ENCODE measurements at regions of chr1 and their contacts with region 1.

Region 1: DNA sequence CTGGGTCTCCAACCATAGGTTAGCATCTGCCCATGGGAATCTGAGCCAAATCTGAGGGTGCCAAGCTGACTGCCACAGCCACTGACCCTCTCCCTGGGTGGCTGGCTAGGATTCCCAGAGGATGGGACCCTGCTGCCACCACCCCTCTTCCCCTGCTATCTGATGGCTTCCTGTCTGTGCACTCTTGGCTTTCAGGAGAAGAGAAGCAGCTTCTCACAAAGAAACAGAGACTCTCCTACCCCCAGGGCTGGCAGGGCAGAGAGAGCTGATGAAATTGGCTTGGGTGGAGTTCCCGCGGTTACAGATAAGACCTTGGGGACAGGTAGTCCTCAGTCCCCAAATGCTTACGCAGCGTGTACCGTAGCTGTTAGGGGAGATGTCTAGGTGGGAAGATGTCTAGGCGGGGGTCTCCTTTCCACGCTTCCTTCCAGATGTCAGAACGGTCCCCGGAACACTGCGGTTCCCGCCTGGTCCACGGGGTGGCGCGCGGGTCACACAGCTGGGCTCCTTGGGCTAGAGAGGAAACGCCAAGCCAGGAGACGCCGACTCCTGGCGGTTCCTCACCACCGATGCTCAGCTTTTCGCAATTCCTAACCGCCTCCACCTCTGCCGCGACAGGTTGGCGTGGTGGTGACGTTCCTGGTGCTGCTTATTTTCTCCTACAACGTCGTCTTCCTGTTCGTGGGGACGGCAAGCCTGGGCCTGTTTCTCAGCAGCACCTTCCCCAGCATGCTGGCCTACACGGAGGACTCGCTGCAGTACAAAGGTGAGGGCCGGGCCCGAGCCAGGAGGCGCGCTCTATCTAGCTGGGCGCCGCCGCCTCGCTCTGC is 40.1 kb downstream of the ELK4 start:
- H3K4me3 Mint-ChIP-seq: peak overlapping the region; percentile 63
- H3K27ac Mint-ChIP-seq: no peak overlapping the region
- H3K4me1 Mint-ChIP-seq: peaks cover 14% of the 10 kb centered on the region
- H3K27me3 Mint-ChIP-seq: peaks cover 7% of the 10 kb centered on the region

Region 2: GRCh38 chr1:205528887-205529825 is 62.6 kb before region 1 on chr1:
- intact Hi-C with region 1: loop called (anchors 10 kb)
- H3K4me3 Mint-ChIP-seq: peak overlapping the region; percentile 35
- H3K27ac Mint-ChIP-seq: peak overlapping the region; percentile 24
- H3K4me1 Mint-ChIP-seq: peaks cover 11% of the 10 kb centered on the region
- H3K27me3 Mint-ChIP-seq: peaks cover 13% of the 10 kb centered on the region

Region 3: DNA sequence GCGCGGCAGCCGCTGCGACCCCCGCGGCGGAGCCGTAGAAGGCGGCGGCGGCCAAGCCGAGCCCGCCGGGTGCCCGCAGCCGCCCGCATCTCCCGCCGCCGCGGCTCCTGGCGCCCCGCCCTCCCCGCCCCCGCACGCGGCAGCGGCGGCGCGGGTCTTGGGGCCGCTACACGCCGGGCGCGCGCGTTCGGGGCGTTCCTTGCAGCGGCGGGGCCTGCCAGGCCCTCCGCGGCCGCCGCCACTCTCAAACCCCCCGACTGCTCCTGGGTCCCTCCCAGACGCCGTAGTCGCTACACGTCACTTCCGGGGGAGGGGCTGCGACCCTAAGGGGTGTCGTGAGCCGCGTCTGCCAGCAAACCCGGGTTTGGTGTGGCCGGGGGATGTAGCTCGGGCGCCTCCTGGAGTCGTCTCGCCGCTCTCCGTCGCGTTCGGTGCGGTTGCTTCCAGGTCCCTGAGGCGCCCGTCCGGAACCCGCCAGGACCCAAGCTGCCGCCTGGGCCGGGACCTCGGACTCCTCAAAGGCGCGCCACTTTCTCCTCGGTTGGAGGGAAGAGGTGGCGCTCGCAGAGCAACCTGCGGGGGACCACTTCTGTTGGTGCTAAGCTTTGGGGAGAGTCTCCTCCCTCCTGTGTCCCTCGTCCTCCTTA is 40.1 kb after region 1 on chr1 and contains the start of gene ELK4:
- intact Hi-C with region 1: loop called (anchors 1 kb)
- H3K4me3 Mint-ChIP-seq: peak within 1 kb of the TSS; percentile 100
- H3K27ac Mint-ChIP-seq: peak within 1 kb of the TSS; percentile 95
- H3K4me1 Mint-ChIP-seq: peaks cover 16% of the 10 kb centered on the region
- H3K27me3 Mint-ChIP-seq: no peaks in the 10 kb centered on the region

Region 4: DNA sequence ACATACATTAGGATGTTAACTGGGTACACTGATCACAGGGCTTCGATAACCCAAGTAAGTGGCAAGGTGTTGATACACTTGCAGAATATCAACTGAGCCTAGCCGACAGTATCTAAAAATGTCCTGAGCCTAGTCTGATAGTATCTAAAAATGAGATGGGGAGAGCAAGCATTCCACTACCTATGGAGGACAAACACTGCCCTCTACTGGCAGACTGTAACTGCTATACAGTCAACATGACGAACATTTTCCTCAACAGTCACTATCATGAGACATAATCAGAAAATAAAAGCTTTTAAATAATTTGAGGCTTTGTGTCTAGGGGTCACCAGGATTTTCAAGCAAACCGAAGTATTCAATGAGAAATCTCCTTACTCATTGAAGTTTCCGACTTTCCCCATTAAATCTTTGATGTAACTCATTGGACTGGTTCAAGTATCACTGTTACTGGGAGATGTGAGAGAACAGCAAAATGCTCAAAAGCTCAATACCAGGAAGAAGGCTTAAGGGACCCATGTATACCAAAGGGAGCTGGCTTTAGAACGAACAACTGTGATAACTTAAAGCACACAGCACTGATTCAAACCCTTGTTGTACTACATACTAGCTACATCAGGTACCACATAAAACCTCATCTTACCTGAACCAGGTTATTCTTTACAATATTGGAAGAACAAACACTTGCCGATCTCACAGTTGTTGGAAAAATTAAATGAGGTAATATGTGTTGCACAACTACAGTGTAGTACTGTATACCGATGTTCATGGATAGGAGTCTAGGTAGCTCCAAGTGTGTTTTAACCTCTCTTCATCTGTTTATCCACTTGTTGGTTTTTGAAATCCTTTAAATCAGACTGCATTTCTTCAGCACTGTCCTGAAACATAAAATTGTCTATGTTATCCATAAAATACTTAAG is 119.6 kb after region 1 on chr1:
- intact Hi-C with region 1: loop called (anchors 1 kb)
- H3K4me3 Mint-ChIP-seq: no peak overlapping the region
- H3K27ac Mint-ChIP-seq: no peak overlapping the region
- H3K4me1 Mint-ChIP-seq: peaks cover 20% of the 10 kb centered on the region
- H3K27me3 Mint-ChIP-seq: peaks cover 2% of the 10 kb centered on the region

Measured in dendritic cell treated with granulocyte-macrophage colony-stimulating factor and Interleukin-4, amounts not matched to agents 40 ng/mL and 50 ng/mL, for 4 days (primary cell).